Aorta (tissue), 5 donors: ENCODE measurements at regions of chr19 and their contacts with region 1.

Region 1: DNA sequence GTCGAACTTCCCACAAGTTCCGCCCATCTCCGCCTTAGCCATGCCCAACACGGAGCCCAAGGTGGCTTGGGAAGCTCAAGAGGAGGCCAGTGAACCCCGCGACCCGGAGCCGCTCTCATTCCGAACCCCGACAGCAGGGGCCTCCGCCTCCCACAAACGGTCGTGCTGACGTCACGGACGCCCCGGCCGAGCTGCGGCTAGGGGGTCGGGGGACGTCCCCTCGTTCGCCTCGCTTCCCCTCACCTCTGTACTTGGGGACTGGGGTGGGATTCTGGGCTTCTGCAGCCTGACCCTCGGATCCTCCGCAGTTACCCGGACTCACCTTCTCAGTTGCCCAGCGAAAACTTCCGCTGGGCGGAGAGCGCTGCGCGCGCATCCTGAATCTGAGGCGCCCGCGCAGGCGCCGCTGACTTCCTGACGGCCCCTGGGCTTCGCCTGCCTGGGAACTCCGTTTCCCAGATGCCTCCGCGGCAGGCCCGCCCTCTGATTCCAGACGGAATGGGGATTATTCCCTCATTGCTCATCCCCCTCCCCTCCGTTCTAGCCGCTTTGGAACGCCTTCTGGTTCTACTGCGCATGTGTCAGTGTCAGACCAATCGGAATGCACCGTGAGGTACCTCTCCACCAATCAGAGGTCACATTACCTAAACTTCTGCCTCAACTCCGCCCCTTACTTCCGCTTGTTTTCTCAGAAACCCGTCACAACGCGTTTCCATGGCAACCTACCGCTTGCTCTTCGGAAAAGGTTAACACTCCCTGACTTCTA is at the start of gene VRK3:
- DNase-seq: peak; percentile 100
- ATAC-seq: peak; percentile 98
- H3K4me3 ChIP-seq: peak within 1 kb of the TSS; percentile 84 to 93
- H3K27ac ChIP-seq: peak within 1 kb of the TSS in 1 of 2 donors; percentile 83
- H3K4me1 ChIP-seq: no peaks in the 10 kb centered on the region
- H3K27me3 ChIP-seq: no peaks in the 10 kb centered on the region
- total RNA-seq, gene VRK3: 36.7 to 40.5 TPM

Region 2: GRCh38 chr19:49730166-49730565 is 295.0 kb before region 1 on chr19:
- intact Hi-C with region 1: no loop called
- DNase-seq: no peak
- ATAC-seq: no peak
- H3K4me3 ChIP-seq: no peak overlapping the region
- H3K27ac ChIP-seq: no peak overlapping the region
- H3K4me1 ChIP-seq: no peaks in the 10 kb centered on the region
- H3K27me3 ChIP-seq: no peaks in the 10 kb centered on the region

Region 3: DNA sequence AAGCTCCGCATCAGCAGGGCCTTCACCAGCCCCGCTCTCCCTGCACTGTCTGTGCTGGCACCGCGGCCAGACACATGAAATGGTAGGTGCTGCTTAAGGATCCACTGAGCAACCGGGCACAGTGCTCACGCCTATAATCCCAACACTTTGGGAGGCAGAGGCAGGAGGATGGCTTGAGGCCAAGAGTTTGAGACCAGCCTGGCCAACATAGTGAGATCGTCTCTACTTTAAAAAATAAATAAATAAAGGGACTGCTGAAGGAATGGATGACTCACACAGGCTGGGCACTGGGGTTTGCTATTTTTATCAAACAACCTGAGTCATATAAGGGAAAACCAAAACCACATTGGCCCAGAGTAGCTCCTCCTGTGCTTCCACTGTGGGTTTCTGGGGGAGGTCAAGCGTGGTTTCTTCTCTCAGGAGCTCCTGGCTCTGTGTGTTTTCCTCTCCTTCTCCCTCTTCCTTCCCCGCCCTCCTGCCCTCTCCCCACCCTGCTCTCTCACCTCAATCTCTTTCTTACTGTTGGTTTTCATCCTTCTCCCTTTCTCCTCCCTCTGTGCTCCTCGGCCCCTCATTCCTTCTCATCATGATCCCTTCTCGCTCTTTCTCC is 21.3 kb before region 1 on chr19:
- intact Hi-C with region 1: loop called in 1 of 2 experiments (anchors 1 kb)
- DNase-seq: peak in 1 of 2 donors; percentile 85
- ATAC-seq: peak; percentile 88
- H3K4me3 ChIP-seq: no peak overlapping the region
- H3K27ac ChIP-seq: peak overlapping the region in 1 of 2 donors; percentile 96
- H3K4me1 ChIP-seq: no peaks in the 10 kb centered on the region
- H3K27me3 ChIP-seq: no peaks in the 10 kb centered on the region